Astrocyte of the cerebellum (primary cell): ENCODE measurements at regions of chr1 and their contacts with region 1.

Region 1: DNA sequence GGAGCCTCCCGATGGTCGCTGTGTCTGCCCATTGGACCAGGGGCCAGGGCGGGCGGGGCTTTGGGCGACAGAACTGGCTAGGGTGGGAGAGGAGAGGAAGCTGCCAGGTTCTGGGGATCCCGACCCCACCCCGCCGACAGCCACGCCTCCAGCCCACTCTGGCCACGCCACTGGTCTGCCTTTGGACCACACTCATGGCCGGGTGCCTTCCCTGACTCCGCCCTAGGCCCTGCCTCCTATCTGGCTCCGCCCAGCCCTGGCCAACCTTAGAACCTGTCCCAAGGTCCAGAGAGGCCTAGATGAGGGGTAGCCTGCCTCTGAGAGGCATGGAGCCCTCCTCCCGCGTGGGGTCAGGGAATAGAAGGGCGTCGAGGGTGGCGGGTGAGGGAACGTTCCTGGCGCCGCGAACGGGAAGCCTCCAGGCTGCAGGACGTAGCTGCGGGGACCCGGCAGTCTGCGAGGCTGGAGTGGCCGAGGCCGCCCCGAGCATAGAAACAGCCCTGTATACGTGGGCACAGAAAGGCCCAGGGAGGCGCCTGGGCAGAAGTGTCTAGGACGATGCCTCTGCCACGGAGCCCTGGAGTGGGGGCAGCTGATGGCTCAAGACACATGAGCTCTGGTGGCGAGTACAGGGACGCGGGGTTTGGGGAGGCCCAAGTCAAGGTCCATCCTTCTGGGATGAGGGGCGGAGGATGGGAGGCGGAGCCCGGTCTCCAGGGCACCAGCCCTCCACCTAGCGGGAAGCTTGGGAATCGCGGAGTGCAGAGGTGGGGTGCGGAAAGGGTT is 11.5 kb upstream of the COL16A1 start:
- DNase-seq: peak; percentile 62
- H3K4me3 ChIP-seq: peak overlapping the region; percentile 6
- CTCF ChIP-seq: peak; percentile 95

Region 2: DNA sequence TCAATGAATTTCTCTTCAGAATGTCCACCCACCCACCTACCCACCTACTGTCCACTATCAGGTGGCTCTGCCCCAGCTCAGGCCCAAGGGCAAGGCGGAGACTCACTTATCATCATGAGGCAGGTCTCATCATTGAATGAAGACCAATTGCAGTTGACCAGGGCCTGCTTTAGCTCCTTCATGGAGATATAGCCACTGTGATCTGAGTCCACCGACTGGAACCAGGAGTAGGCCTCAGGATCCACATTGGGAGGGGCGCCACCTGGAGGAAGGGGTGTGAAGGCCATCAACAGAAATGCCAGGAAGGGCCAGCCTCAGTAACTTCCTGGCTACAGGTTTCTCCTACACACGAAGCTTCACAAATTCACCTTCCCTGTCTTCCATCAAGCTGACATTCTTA is 82.2 kb before region 1 on chr1:
- in situ Hi-C with region 1: loop called (anchors 10 kb)
- DNase-seq: no peak
- H3K4me3 ChIP-seq: no peak overlapping the region
- CTCF ChIP-seq: peak; percentile 54

Region 3: GRCh38 chr1:31651089-31651420 is 64.2 kb before region 1 on chr1:
- in situ Hi-C with region 1: loop called (anchors 5 kb)
- DNase-seq: no peak
- H3K4me3 ChIP-seq: no peak overlapping the region
- CTCF ChIP-seq: no peak

Region 4: DNA sequence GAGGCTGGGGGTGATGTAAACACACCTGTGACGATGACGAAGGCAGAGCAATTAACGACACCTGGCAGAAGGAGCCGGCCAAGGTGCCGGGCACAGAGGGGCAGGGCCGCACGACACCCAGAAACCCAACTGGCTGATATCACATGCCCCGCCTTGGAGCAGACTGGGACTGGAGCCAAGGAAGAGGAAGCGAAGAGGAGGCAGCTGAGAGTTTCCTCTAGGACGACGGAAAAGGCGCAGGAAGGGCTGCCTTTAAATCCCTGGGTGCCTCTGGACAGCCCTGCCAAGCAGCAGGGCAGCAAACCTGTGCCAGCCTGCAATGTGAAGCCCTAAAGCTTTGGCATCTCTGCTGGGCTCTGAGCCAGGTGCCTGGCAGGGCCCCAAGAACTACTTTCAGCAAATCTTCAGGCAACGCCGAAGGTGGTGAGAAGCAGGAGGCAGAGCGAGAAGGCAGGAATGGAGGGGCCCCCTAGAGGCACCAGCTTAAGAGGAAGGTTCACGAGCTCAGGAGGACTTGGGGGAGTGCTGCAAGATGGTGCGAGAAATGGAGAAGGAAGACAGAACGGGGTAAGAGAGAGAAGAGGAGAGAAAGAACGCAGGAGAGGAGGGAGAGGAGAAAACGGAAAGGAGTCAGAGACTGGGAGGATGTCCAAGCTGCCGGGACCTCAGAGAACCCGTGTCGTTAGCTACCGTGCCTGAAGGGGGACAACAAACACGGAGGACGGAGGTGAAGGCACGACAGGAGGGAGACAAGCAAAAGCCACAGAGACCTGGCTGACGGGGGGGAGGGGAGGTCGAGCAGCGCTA is 45.3 kb before region 1 on chr1:
- in situ Hi-C with region 1: loop called (anchors 5 kb)
- DNase-seq: no peak
- H3K4me3 ChIP-seq: no peak overlapping the region
- CTCF ChIP-seq: peak; percentile 46

Region 5: GRCh38 chr1:31815752-31816500 is 100.6 kb after region 1 on chr1 and contains the start of gene SPOCD1:
- in situ Hi-C with region 1: no loop called
- DNase-seq: no peak
- H3K4me3 ChIP-seq: no peak within 1 kb of the TSS
- CTCF ChIP-seq: peak; percentile 45